Endothelial cell of umbilical vein (primary cell): ENCODE measurements at regions of chr21 and their contacts with region 1.

Region 1: GRCh38 chr21:31135531-31136184 is 97.4 kb upstream of the KRTAP19-8 start:
- DNase-seq: peak; percentile 31
- H3K4me3 ChIP-seq: no peak overlapping the region
- H3K27ac ChIP-seq: no peak overlapping the region
- H3K4me1 ChIP-seq: peaks cover 5% of the 10 kb centered on the region
- H3K27me3 ChIP-seq: no peaks in the 10 kb centered on the region
- CTCF ChIP-seq: no peak
- POLR2A ChIP-seq: no peak

Region 2: GRCh38 chr21:30924146-30924700 is 211.4 kb before region 1 on chr21:
- CTCF ChIA-PET with region 1: no interaction called
- POLR2A ChIA-PET with region 1: no interaction called
- dilution Hi-C with region 1: no loop called
- intact Hi-C with region 1: no loop called
- DNase-seq: no peak
- H3K4me3 ChIP-seq: no peak overlapping the region
- H3K27ac ChIP-seq: no peak overlapping the region
- H3K4me1 ChIP-seq: no peaks in the 10 kb centered on the region
- H3K27me3 ChIP-seq: no peaks in the 10 kb centered on the region
- CTCF ChIP-seq: no peak
- POLR2A ChIP-seq: no peak

Region 3: DNA sequence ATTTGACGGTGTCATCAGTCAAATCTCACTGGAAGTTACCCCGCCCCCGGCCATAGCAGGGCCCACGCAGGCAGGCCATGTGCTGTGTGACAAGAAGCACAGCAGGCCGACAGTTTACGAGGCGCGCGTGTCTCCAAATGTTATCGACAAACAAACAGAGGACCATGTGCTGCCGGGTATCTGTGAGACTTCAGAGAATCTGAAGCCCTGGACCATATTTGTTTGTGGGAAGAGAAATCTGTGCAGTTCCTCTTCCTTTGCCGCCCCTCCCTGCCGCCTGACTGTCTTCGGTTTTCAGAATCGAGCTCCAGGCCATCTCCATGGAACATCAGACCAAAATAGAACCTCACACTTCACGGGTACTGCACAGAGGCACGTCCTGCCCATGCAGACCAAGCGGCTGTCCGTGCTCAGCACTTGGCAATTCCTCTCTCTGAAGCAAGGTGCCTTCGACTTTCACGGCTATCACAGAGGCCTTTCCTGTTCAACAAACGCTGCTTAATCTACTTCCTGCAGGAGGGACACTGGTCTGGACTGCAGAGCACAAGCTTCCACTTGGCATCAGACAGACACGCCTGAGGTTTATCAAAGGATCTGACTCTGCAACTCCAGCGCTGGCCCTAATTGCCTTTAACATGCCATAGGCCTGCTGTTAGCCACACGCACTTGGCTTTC is 38.4 kb after region 1 on chr21:
- CTCF ChIA-PET with region 1: no interaction called
- POLR2A ChIA-PET with region 1: no interaction called
- dilution Hi-C with region 1: no loop called
- intact Hi-C with region 1: loop called (anchors 1 kb)
- DNase-seq: peak; percentile 78
- H3K4me3 ChIP-seq: no peak overlapping the region
- H3K27ac ChIP-seq: peak overlapping the region; percentile 26
- H3K4me1 ChIP-seq: peaks cover 5% of the 10 kb centered on the region
- H3K27me3 ChIP-seq: no peaks in the 10 kb centered on the region
- CTCF ChIP-seq: no peak
- POLR2A ChIP-seq: no peak